Activated CD4-positive, alpha-beta memory T cell treated with anti-CD3 and anti-CD28 coated beads, Interleukin-2, amount 10 ng/mL, durations not matched to agents 7 days and 5 days (primary cell): ENCODE measurements at regions of chr20 and their contacts with region 1.

Region 1: DNA sequence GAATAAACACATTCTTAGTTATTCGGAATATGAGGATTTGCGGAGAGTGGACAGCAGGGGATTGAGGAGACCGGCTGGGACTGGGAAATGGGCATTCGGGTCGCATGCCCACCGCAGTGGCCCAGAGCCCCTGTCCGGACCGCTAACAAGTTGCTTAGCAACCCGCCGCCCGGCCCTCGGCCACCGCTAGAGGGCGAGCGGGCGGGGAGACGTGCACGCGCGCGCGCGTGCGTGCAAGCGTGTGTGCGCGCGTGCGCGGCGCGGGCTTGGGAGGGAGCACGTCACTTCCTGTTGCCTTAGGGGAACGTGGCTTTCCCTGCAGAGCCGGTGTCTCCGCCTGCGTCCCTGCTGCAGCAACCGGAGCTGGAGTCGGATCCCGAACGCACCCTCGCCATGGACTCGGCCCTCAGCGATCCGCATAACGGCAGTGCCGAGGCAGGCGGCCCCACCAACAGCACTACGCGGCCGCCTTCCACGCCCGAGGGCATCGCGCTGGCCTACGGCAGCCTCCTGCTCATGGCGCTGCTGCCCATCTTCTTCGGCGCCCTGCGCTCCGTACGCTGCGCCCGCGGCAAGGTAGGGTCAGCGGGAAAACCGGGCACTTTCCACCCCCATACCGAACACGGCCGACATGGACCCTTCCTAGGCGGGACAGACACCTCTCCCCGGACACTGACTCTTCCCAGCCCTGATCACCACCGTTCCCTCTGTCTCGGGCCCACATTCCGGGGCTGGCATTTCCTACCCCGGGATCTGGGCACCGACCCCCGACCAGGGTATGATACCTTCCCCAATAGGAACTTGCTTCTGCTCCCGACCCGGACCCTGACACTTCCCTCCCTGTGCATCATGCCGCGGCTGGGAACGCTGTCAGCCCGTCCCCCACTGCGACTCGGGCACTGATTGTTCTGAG is at the start of gene HM13:
- DNase-seq: peak; percentile 89
- H3K4me3 Mint-ChIP-seq: no peak within 1 kb of the TSS
- H3K27ac Mint-ChIP-seq: peak within 1 kb of the TSS; percentile 5
- H3K4me1 Mint-ChIP-seq: peaks cover 9% of the 10 kb centered on the region
- H3K27me3 Mint-ChIP-seq: no peaks in the 10 kb centered on the region
- total RNA-seq, gene HM13: 162 to 165 TPM

Region 2: GRCh38 chr20:31381766-31382165 is 132.6 kb before region 1 on chr20:
- CTCF ChIA-PET with region 1: no interaction called
- POLR2A ChIA-PET with region 1: no interaction called
- DNase-seq: no peak
- H3K4me3 Mint-ChIP-seq: no peak overlapping the region
- H3K27ac Mint-ChIP-seq: no peak overlapping the region
- H3K4me1 Mint-ChIP-seq: no peaks in the 10 kb centered on the region
- H3K27me3 Mint-ChIP-seq: no peaks in the 10 kb centered on the region

Region 3: DNA sequence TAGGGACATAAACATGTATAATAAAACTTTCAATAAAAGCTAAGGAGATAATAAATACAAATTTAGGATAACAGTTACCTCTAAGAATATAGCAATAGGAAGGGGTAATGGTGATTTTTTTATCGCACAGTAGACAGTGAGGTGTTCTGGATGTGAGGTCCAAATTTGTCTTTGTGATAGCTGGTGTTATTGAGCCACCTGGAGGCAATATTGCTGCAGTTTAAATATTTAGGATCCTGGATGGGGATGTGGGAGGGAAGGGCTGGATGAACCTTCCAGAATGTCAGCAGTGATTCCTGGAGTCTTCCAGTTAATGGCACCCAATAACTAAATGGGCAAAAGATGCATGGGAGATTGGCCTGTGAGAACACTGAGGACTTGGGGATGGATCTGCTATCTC is 60.0 kb before region 1 on chr20:
- CTCF ChIA-PET with region 1: interaction called, 11 read pairs
- POLR2A ChIA-PET with region 1: no interaction called
- DNase-seq: no peak
- H3K4me3 Mint-ChIP-seq: no peak overlapping the region
- H3K27ac Mint-ChIP-seq: no peak overlapping the region
- H3K4me1 Mint-ChIP-seq: no peaks in the 10 kb centered on the region
- H3K27me3 Mint-ChIP-seq: peaks cover 7% of the 10 kb centered on the region